ENCODE measurements at regions of chr17 and their contacts with region 1.

Region 1: GRCh38 chr17:46832945-46833839 is 14.7 kb upstream of the WNT3 start:
- DNase-seq: no peak
- H3K4me3 ChIP-seq: no peak overlapping the region
- CTCF ChIP-seq: no peak

Region 2: GRCh38 chr17:46785696-46786095 is 47.5 kb before region 1 on chr17:
- CTCF ChIA-PET with region 1: interaction called, 10 read pairs
- POLR2A ChIA-PET with region 1: no interaction called
- DNase-seq: no peak
- H3K4me3 ChIP-seq: no peak overlapping the region
- CTCF ChIP-seq: no peak

Region 3: DNA sequence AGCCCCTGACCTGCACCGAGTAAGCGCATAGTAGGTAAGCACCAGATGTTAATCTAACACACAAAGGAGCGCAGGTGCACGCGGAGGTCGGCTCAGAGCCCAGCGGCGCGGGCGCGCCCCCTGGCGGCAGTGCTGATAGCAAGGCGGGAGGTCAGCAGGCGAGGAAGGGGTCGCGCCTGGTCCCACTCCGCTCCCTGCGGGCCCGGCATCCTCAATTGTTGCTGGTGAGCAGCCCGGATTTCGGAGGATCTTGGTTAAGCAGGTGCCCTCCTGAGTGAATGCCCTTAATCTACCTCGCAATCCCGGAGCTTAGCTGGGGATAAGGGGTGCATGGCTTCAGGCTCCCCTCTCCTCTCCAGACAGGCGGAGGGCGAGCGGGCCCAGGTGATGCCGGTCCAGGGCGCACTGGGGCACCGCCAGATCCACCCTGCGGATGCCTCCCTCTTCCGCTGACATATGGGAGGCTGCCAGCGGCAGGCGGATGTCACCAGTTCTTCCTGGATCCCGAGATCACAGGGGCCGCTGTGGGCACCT is 10.7 kb before region 1 on chr17:
- CTCF ChIA-PET with region 1: interaction called, 76 read pairs
- POLR2A ChIA-PET with region 1: no interaction called
- DNase-seq: no peak
- H3K4me3 ChIP-seq: no peak overlapping the region
- CTCF ChIP-seq: peak; percentile 54

Region 4: DNA sequence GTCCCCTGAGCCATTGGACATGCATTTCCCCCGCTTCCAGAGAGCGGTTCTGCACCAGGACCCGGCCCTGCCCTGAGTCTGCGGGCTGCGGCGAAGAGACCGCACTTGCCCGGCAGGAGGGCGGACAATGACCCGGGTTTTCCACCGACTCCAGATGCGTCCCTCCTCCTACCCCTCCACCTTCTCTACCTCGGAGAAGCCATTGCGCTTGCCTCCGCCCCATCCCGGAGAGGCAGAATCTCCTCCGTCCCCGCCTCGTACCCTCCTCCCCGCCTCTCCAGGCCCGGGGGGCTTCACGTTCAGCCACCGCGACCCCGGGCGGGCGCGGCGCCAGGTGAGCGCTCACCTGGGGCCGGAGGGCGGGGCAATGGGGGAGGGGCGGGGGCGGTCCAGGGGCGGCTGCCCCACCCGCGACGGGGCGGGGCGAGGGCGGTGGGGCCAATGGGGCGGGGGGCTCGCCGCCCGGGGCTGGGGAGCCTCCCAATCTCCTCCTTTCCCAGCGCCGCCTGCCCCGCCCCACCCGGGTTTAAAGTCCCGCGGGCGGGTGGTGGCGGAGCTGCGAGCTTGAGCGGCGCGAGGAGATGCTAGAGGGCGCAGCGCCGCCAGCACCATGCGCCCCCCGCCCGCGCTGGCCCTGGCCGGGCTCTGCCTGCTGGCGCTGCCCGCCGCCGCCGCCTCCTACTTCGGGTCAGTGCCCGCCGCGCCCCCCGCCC is 18.0 kb after region 1 on chr17 and contains the start of gene WNT9B:
- CTCF ChIA-PET with region 1: interaction called, 14 read pairs
- POLR2A ChIA-PET with region 1: no interaction called
- DNase-seq: no peak
- H3K4me3 ChIP-seq: peak within 1 kb of the TSS; percentile 32
- CTCF ChIP-seq: no peak